ENCODE measurements at regions of chr1 and their contacts with region 1.

Region 1: GRCh38 chr1:65209005-65209885 is 61.2 kb downstream of the AK4 start:
- DNase-seq: peak in 1 of 5 donors; percentile 39
- ATAC-seq: peak; percentile 25 to 73 (median 58)
- H3K4me3 ChIP-seq: no peak overlapping the region
- H3K27ac ChIP-seq: peak overlapping the region in 2 of 12 donors; percentile 35 to 49
- H3K4me1 ChIP-seq: peaks cover 0 to 23% (median 14%) of the 10 kb centered on the region in 12 donors
- H3K27me3 ChIP-seq: no peaks in the 10 kb centered on the region
- CTCF ChIP-seq: peak; percentile 58 to 81 (median 68)
- POLR2A ChIP-seq: no peak

Region 2: GRCh38 chr1:64856553-64856952 is 352.7 kb before region 1 on chr1:
- intact Hi-C with region 1: loop called in 3 of 10 experiments (anchors 10 kb)
- DNase-seq: peak in 1 of 5 donors; percentile 43
- ATAC-seq: peak in 2 of 4 donors; percentile 23 to 30
- H3K4me3 ChIP-seq: no peak overlapping the region
- H3K27ac ChIP-seq: peak overlapping the region in 1 of 12 donors; percentile 27
- H3K4me1 ChIP-seq: peaks cover 0 to 6% (median 0%) of the 10 kb centered on the region in 12 donors
- H3K27me3 ChIP-seq: no peaks in the 10 kb centered on the region
- CTCF ChIP-seq: no peak
- POLR2A ChIP-seq: no peak

Region 3: GRCh38 chr1:64877151-64877550 is 332.1 kb before region 1 on chr1:
- intact Hi-C with region 1: loop called in 1 of 10 experiments (anchors 10 kb)
- DNase-seq: no peak
- ATAC-seq: no peak
- H3K4me3 ChIP-seq: no peak overlapping the region
- H3K27ac ChIP-seq: peak overlapping the region in 1 of 12 donors; percentile 21
- H3K4me1 ChIP-seq: peaks cover 0 to 45% (median 13%) of the 10 kb centered on the region in 12 donors
- H3K27me3 ChIP-seq: no peaks in the 10 kb centered on the region
- CTCF ChIP-seq: no peak
- POLR2A ChIP-seq: no peak

Region 4: GRCh38 chr1:65067491-65068201 is 141.6 kb before region 1 on chr1:
- intact Hi-C with region 1: loop called in 6 of 10 experiments (anchors 5 kb)
- DNase-seq: peak; percentile 72 to 85 (median 81)
- ATAC-seq: peak; percentile 45 to 63 (median 58)
- H3K4me3 ChIP-seq: peak overlapping the region; percentile 71 to 98 (median 88)
- H3K27ac ChIP-seq: peak overlapping the region; percentile 95 to 100 (median 99)
- H3K4me1 ChIP-seq: peaks cover 0 to 43% (median 31%) of the 10 kb centered on the region in 12 donors
- H3K27me3 ChIP-seq: no peaks in the 10 kb centered on the region
- CTCF ChIP-seq: no peak
- POLR2A ChIP-seq: peak in 1 of 2 donors; percentile 65

Region 5: DNA sequence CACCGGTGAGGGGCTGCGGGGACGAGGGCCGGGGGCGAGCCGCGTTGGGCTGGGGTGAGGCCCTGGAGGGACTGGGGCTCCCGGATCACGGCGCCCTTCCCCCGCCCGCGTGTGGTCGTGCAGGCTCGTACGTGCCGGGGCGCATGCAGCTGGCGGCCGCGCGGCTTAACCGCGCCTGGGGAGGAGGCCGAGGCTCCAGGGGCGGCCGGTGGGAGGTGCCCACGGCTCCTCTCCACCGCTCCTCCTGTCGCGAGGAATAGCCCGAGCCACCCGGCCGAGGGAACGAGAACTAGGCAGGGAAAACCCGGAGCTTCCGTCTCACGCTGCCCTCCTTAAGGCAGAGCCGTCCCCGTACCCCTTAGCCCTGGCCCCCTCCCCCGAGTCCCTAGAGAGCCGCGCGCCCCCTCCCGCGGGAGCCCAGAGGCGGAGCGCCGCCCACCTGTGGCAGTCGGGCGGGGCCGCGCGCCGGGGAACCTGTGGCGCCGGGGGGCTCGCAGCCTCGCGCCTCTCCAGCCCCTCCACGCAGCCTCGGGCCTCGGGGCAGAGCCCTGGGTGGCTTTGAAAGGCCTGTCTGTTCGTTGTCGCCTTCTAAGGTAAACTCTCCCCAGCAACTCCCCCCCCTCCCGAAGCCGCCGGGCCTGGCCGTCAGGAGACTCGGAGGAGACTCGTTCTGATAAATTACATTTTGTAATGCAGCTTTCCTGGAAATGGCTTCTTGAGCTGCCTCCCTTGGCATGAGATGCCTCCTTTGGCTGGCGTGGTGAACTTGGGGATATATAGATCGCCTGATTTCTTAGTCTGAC is 60.5 kb before region 1 on chr1:
- intact Hi-C with region 1: loop called (anchors 2 to 10 kb)
- DNase-seq: peak; percentile 41 to 80 (median 53)
- ATAC-seq: peak; percentile 31 to 79 (median 72)
- H3K4me3 ChIP-seq: peak overlapping the region; percentile 70 to 95 (median 90)
- H3K27ac ChIP-seq: peak overlapping the region; percentile 83 to 96 (median 92)
- H3K4me1 ChIP-seq: peaks cover 4 to 29% (median 12%) of the 10 kb centered on the region in 12 donors
- H3K27me3 ChIP-seq: no peaks in the 10 kb centered on the region
- CTCF ChIP-seq: no peak
- POLR2A ChIP-seq: no peak

Region 6: GRCh38 chr1:65297672-65298071 is 88.4 kb after region 1 on chr1:
- intact Hi-C with region 1: no loop called
- DNase-seq: no peak
- ATAC-seq: no peak
- H3K4me3 ChIP-seq: no peak overlapping the region
- H3K27ac ChIP-seq: no peak overlapping the region
- H3K4me1 ChIP-seq: no peaks in the 10 kb centered on the region
- H3K27me3 ChIP-seq: no peaks in the 10 kb centered on the region
- CTCF ChIP-seq: no peak
- POLR2A ChIP-seq: no peak

Measured in heart left ventricle (tissue), 16 donors.